Naive thymus-derived CD4-positive, alpha-beta T cell (primary cell): ENCODE measurements at regions of chr6 and their contacts with region 1.

Region 1: GRCh38 chr6:4008324-4009047 is 70.5 kb downstream of the FAM217A start:
- DNase-seq: peak in 7 of 9 donors; percentile 27 to 63 (median 57)
- ATAC-seq: peak; percentile 94
- H3K4me3 ChIP-seq: no peak overlapping the region
- H3K4me3 Mint-ChIP-seq: peak overlapping the region in 1 of 10 donors; percentile 36
- H3K27ac ChIP-seq: no peak overlapping the region
- H3K27ac Mint-ChIP-seq: peak overlapping the region in 3 of 9 donors; percentile 0 to 63 (median 43)
- H3K4me1 ChIP-seq: peaks cover 15 to 27% of the 10 kb centered on the region in 2 donors
- H3K4me1 Mint-ChIP-seq: peaks cover 40 to 71% (median 60%) of the 10 kb centered on the region in 7 donors
- H3K27me3 ChIP-seq: no peaks in the 10 kb centered on the region
- H3K27me3 Mint-ChIP-seq: no peaks in the 10 kb centered on the region

Region 2: GRCh38 chr6:3990692-3991501 is 17.6 kb before region 1 on chr6:
- CTCF ChIA-PET with region 1: interaction called, 11 read pairs
- POLR2A ChIA-PET with region 1: no interaction called
- intact Hi-C with region 1: loop called in 1 of 2 experiments (anchors 2 kb)
- DNase-seq: peak; percentile 45 to 72 (median 58)
- ATAC-seq: peak; percentile 96
- H3K4me3 ChIP-seq: no peak overlapping the region
- H3K4me3 Mint-ChIP-seq: peak overlapping the region in 2 of 10 donors; percentile 19 to 29
- H3K27ac ChIP-seq: no peak overlapping the region
- H3K27ac Mint-ChIP-seq: peak overlapping the region in 3 of 9 donors; percentile 3 to 43 (median 19)
- H3K4me1 ChIP-seq: peaks cover 0 to 7% of the 10 kb centered on the region in 2 donors
- H3K4me1 Mint-ChIP-seq: peaks cover 13 to 37% (median 25%) of the 10 kb centered on the region in 7 donors
- H3K27me3 ChIP-seq: no peaks in the 10 kb centered on the region
- H3K27me3 Mint-ChIP-seq: no peaks in the 10 kb centered on the region

Region 3: DNA sequence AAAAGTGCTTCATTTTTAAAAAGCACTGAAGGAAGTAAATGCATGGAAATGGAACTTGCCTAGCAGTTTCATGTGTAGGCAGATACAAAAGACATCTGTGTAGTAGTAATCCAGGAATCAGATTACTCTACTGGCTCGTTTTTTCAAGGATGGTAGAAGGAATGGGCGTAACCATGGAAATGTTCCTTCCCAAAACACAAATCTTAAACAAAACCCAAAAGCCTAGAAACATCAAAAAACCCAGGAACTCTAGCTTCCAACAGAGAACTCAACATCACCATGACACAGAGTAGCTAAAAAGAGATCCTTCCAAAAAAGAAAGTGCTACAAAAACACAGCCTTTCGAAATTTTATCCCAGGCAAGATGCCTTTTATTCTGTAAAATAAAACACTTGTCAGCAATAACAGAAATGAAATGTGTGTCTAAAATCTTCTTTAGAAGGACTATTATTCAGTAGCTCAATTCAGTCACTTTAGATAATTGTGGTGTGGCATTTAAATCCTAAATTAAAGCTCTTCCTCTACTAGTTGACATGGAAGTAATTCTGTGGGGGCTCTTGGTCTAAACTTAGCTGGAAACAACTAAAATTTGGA is 11.2 kb before region 1 on chr6:
- CTCF ChIA-PET with region 1: interaction called, 11 read pairs
- POLR2A ChIA-PET with region 1: interaction called, 3 read pairs
- intact Hi-C with region 1: no loop called
- DNase-seq: no peak
- ATAC-seq: no peak
- H3K4me3 ChIP-seq: no peak overlapping the region
- H3K4me3 Mint-ChIP-seq: no peak overlapping the region
- H3K27ac ChIP-seq: no peak overlapping the region
- H3K27ac Mint-ChIP-seq: peak overlapping the region in 1 of 9 donors; percentile 20
- H3K4me1 ChIP-seq: no peaks in the 10 kb centered on the region
- H3K4me1 Mint-ChIP-seq: peaks cover 8 to 44% (median 33%) of the 10 kb centered on the region in 7 donors
- H3K27me3 ChIP-seq: no peaks in the 10 kb centered on the region
- H3K27me3 Mint-ChIP-seq: no peaks in the 10 kb centered on the region

Region 4: DNA sequence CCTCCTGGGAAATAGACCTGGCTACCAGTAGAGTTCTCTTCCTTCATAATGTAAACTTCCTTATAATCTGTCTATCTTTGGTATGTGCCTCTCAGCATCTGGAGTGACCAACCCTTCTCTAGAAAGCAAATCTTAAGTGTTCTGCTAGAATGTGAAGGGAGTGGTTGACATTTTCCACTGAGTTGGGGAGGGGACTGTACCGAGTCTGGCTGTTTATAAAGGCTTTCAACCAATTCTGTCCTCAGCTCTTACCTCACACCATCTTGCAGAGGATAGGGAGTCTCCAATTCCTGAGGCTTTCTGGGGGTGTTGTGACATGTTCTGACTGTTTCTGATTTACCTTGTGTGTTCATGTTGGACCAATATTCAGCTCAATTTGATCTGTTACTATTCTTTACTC is 30.9 kb after region 1 on chr6:
- CTCF ChIA-PET with region 1: no interaction called
- POLR2A ChIA-PET with region 1: no interaction called
- intact Hi-C with region 1: no loop called
- DNase-seq: no peak
- ATAC-seq: no peak
- H3K4me3 ChIP-seq: no peak overlapping the region
- H3K4me3 Mint-ChIP-seq: no peak overlapping the region
- H3K27ac ChIP-seq: no peak overlapping the region
- H3K27ac Mint-ChIP-seq: peak overlapping the region in 4 of 9 donors; percentile 28 to 70 (median 58)
- H3K4me1 ChIP-seq: peaks cover 0 to 8% of the 10 kb centered on the region in 2 donors
- H3K4me1 Mint-ChIP-seq: peaks cover 23 to 49% (median 40%) of the 10 kb centered on the region in 7 donors
- H3K27me3 ChIP-seq: no peaks in the 10 kb centered on the region
- H3K27me3 Mint-ChIP-seq: no peaks in the 10 kb centered on the region